ENCODE measurements at regions of chr17 and their contacts with region 1.

Region 1: DNA sequence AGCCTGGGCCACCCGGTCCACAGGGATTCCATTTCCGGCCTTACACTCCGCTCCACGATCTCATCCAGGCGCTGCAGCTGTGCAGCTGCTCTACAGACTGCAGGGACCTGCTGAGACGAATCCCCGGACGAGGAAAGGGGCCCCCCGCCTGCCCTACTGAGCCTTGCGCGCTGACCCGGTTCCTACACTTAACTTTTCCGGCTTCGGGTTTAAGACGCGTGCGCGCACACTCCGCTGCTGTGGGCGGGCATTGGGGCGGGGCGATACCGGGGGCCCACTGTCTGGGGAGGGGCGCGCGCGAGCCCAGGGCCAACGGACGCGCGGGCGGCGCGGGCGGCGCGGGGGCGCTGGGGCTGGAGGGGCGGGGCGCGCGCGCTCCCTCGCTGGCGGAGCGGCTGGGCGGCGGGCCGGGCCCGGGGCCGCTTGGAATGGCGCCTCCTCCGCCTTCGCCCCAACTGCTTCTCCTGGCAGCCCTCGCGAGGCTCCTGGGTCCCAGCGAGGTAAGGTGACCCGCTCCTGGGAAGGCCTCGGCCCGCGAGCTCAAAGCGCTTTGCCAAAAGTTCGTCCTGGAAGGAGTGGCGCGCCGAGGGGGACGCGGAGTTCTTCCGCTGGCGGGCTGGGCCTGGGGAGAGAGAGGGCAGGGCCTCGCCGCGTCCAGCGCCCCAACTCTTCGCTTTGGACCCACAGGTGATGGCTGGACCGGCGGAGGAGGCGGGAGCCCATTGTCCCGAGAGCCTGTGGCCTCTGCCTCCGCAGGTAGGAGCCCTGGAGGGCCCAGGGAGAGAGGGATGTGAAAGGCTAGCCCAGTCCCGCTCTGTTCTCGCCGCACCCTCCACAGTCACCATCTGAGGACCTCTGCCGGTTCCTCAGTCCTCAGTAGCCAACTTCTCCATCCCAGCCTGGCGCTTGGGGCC is at the start of gene TP53I13:
- DNase-seq: peak; percentile 91
- H3K4me3 Mint-ChIP-seq: peak within 1 kb of the TSS; percentile 92
- H3K27ac Mint-ChIP-seq: peak within 1 kb of the TSS; percentile 96
- H3K4me1 Mint-ChIP-seq: peaks cover 36% of the 10 kb centered on the region
- H3K27me3 Mint-ChIP-seq: no peaks in the 10 kb centered on the region
- total RNA-seq, gene TP53I13: 112 to 118 TPM

Region 2: GRCh38 chr17:29458066-29458465 is 110.5 kb before region 1 on chr17:
- CTCF ChIA-PET with region 1: no interaction called
- POLR2A ChIA-PET with region 1: no interaction called
- DNase-seq: no peak
- H3K4me3 Mint-ChIP-seq: no peak overlapping the region
- H3K27ac Mint-ChIP-seq: no peak overlapping the region
- H3K4me1 Mint-ChIP-seq: peaks cover 1% of the 10 kb centered on the region
- H3K27me3 Mint-ChIP-seq: no peaks in the 10 kb centered on the region

Region 3: GRCh38 chr17:29557085-29557697 is 11.4 kb before region 1 on chr17:
- CTCF ChIA-PET with region 1: interaction called, 8 read pairs
- POLR2A ChIA-PET with region 1: interaction called, 24 read pairs
- DNase-seq: no peak
- H3K4me3 Mint-ChIP-seq: no peak overlapping the region
- H3K27ac Mint-ChIP-seq: no peak overlapping the region
- H3K4me1 Mint-ChIP-seq: peaks cover 37% of the 10 kb centered on the region
- H3K27me3 Mint-ChIP-seq: no peaks in the 10 kb centered on the region

Region 4: GRCh38 chr17:29589524-29590410 is 21.2 kb after region 1 on chr17 and contains the start of gene GIT1:
- CTCF ChIA-PET with region 1: interaction called, 12 read pairs
- POLR2A ChIA-PET with region 1: interaction called, 41 read pairs
- DNase-seq: peak; percentile 88
- H3K4me3 Mint-ChIP-seq: peak within 1 kb of the TSS; percentile 97
- H3K27ac Mint-ChIP-seq: peak within 1 kb of the TSS; percentile 86
- H3K4me1 Mint-ChIP-seq: peaks cover 72% of the 10 kb centered on the region
- H3K27me3 Mint-ChIP-seq: no peaks in the 10 kb centered on the region
- total RNA-seq, gene GIT1: 76.6 to 80.4 TPM